ENCODE measurements at regions of chr1 and their contacts with region 1.

Region 1: DNA sequence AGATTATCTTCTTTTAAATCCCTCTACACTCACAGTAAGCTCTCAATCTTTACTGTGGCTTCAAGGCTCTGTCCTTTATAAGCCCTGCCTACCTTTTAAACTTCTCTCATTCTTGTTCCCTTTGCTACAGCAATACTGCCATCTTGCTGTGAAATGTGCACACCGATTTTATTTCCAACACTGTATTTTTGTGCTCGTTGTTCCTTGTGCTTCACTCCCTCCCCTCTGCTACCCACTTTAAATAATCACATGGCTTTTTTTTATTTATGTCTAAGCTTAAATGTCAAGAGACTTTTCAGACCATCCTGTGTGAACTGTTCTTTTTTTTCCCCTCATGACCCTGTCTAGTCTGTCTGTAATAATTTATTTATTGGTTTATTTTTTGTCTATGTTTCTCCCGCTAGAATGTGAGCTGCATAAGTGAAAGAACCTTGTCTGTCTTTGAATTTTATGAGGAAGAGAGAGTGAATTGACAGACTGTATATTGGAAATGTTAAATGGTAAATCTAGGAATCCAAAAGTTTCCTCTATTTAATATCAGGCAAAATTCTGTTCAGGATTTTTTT is 45.7 kb downstream of the ABCD3 start:
- DNase-seq: no peak
- ATAC-seq: peak; percentile 72

Region 2: GRCh38 chr1:94025383-94026340 is 438.2 kb before region 1 on chr1:
- intact Hi-C with region 1: loop called (anchors 5 kb)
- DNase-seq: no peak
- ATAC-seq: no peak

Region 3: GRCh38 chr1:94335950-94336349 is 127.9 kb before region 1 on chr1:
- intact Hi-C with region 1: loop called (anchors 5 kb)
- DNase-seq: no peak
- ATAC-seq: peak; percentile 91

Region 4: GRCh38 chr1:94358630-94359599 is 104.9 kb before region 1 on chr1:
- intact Hi-C with region 1: loop called (anchors 5 kb)
- DNase-seq: no peak
- ATAC-seq: peak; percentile 79

Region 5: DNA sequence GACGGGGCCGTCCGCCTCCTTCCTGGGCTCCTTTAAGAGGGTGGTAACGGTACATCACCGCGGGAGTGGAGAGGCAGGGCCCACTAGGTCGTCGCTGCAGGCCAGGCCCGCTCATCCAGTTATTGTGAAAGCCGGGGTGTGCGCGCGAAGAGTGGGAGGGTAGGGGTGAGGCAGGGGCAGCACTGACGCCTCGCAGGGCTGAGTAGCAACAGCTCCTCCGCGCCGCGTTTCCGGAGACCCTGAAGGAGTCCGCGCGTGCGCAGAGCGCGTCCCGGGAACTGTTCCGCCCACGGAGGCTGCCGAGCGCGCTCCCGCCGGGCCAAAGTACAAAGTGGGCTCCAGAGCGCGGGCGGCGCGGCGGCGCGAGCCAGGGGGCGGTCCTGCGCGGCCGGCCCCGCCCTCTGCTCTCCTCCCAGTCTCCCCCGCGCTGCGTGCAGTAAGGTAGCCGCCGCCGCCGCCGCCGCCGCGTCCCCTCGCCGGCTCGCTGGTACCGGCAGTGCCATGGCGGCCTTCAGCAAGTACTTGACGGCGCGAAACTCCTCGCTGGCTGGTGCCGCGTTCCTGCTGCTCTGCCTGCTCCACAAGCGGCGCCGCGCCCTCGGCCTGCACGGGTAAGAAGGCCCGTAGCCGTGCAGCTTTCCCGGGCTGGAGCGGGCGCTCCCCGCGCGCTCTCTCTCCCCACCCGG is 45.7 kb before region 1 on chr1 and contains the start of gene ABCD3:
- intact Hi-C with region 1: loop called (anchors 5 kb)
- DNase-seq: peak; percentile 99
- ATAC-seq: peak; percentile 98
- total RNA-seq, gene ABCD3: 69.0 TPM

Measured in Right ventricle myocardium inferior (tissue), 1 donor.